ENCODE measurements at regions of chr18 and their contacts with region 1.

Region 1: DNA sequence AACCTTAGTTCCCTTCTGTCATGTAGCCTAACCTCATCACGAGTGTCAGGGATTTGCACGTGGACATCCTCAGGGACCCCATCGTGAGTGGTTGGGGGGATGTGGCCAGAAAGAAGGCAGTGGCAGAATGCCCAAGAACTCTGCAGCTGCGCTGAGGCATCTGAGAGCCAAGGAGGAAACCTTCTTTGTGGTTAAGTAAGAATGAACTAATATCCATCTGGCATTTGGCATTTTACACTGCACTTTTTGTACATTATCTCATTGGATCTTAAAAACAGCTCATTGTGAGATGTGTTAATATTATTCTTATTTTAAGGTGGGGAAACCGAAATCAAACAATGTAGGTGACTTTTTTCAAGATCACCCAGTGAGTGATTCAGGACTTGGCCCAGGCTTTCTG is 32.6 kb upstream of the APCDD1 start:
- DNase-seq: peak; percentile 7
- H3K4me3 Mint-ChIP-seq: no peak overlapping the region
- H3K27ac Mint-ChIP-seq: peak overlapping the region; percentile 81
- H3K4me1 Mint-ChIP-seq: peaks cover 47% of the 10 kb centered on the region
- H3K27me3 Mint-ChIP-seq: no peaks in the 10 kb centered on the region
- CTCF ChIP-seq: no peak

Region 2: DNA sequence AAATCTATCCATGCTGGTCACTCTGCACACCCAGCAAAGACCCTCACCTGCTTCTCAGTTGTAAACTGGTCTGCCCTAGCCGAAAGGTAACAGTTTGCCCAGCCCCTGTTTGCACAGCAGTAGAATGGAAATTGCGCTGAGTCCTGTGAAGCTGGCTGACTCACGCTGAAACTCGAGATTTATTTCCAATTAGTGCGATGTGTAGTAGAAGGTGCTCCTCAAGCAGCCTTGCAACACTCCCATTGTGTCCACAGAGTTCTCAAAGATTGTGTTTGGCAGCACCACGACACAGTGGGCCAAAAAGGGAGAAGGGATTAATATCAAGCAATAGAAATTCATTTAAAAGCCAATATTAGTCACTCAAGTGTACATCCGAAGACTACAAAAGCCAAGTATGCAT is 10.9 kb after region 1 on chr18:
- CTCF ChIA-PET with region 1: interaction called, 3 read pairs
- POLR2A ChIA-PET with region 1: interaction called, 16 read pairs
- intact Hi-C with region 1: no loop called
- DNase-seq: peak; percentile 70
- H3K4me3 Mint-ChIP-seq: no peak overlapping the region
- H3K27ac Mint-ChIP-seq: peak overlapping the region; percentile 35
- H3K4me1 Mint-ChIP-seq: peaks cover 9% of the 10 kb centered on the region
- H3K27me3 Mint-ChIP-seq: no peaks in the 10 kb centered on the region
- CTCF ChIP-seq: no peak

Region 3: GRCh38 chr18:11055721-11056120 is 633.9 kb after region 1 on chr18:
- CTCF ChIA-PET with region 1: no interaction called
- POLR2A ChIA-PET with region 1: no interaction called
- intact Hi-C with region 1: no loop called
- DNase-seq: no peak
- H3K4me3 Mint-ChIP-seq: no peak overlapping the region
- H3K27ac Mint-ChIP-seq: no peak overlapping the region
- H3K4me1 Mint-ChIP-seq: peaks cover 6% of the 10 kb centered on the region
- H3K27me3 Mint-ChIP-seq: no peaks in the 10 kb centered on the region
- CTCF ChIP-seq: no peak